ENCODE measurements at regions of chr7 and their contacts with region 1.

Region 1: GRCh38 chr7:100132697-100133151 is 6.0 kb downstream of the MBLAC1 start:
- DNase-seq: peak in 3 of 5 donors; percentile 48 to 72 (median 53)
- H3K4me3 ChIP-seq: no peak overlapping the region
- H3K27ac ChIP-seq: no peak overlapping the region
- H3K4me1 ChIP-seq: peaks cover 2% of the 10 kb centered on the region
- H3K27me3 ChIP-seq: no peaks in the 10 kb centered on the region
- CTCF ChIP-seq: peak; percentile 37 to 52 (median 48)
- EP300 ChIP-seq: no peak
- POLR2A ChIP-seq: no peak

Region 2: DNA sequence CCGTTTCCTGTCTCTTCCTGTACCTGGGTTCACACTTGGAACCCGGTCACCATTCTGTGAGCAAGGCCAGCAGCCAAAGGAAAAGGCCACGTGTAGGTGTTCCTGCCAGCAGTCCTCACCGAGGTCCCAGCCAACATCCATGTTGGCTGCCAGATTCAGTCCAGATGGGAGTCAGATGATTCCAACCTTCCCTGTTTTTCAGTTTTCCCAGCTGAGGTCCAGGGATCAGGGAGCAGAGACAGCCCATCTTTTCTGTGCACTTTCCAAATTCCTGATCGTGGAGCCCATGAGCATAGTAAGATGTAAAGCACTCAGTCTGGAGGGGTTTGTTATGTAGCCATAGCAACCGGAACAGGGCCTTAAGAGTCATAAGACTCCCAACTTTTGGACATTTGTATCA is 83.2 kb after region 1 on chr7:
- intact Hi-C with region 1: loop called (anchors 5 to 10 kb)
- DNase-seq: peak; percentile 43 to 60 (median 49)
- H3K4me3 ChIP-seq: no peak overlapping the region
- H3K27ac ChIP-seq: peak overlapping the region in 1 of 2 donors; percentile 21
- H3K4me1 ChIP-seq: peaks cover 2% of the 10 kb centered on the region
- H3K27me3 ChIP-seq: no peaks in the 10 kb centered on the region
- CTCF ChIP-seq: no peak
- EP300 ChIP-seq: no peak
- POLR2A ChIP-seq: no peak

Region 3: GRCh38 chr7:100221231-100221718 is 88.6 kb after region 1 on chr7:
- intact Hi-C with region 1: loop called in 3 of 4 experiments (anchors 5 to 10 kb)
- DNase-seq: no peak
- H3K4me3 ChIP-seq: no peak overlapping the region
- H3K27ac ChIP-seq: no peak overlapping the region
- H3K4me1 ChIP-seq: no peaks in the 10 kb centered on the region
- H3K27me3 ChIP-seq: no peaks in the 10 kb centered on the region
- CTCF ChIP-seq: no peak
- EP300 ChIP-seq: no peak
- POLR2A ChIP-seq: no peak

Measured in ovary (tissue), 10 donors.